ENCODE measurements at regions of chr14 and their contacts with region 1.

Region 1: DNA sequence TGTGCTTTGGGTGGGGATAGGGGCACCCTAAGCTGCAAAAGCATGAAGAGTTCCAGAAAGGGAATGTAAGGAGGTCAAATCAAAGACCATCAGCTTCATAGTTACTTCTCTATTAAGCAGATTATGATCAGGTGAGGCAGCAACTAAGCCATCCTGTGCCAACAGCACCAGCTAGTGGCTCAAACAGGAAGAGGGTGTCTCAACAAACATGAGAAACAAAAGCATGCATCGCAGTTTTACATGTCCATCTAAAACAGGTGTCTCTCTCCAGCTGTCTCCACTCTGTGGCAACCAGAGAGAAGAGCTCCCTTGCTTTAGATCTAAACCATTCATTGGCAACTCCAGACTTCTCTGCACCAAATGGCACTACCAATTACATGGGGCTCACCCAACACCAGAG is 52.9 kb downstream of the ACTN1 start:
- DNase-seq: no peak

Region 2: DNA sequence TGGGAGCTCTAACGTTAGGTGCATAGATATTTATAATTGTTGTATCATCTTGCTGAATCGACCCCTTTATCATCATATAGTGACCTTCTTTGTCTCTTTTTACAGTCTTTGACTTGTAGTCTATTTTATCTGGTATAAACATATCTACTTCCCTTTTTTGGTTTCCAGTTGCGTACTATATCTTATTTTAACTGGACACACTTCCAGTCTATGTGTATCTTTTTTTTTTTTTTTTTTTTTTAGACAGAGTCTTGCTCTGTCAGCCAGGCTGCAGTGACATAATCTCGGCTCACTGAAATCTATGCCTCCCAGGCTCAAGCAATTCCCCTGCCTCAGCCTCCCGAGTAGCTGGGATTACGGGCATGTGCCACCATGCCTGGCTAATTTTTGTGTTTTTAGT is 91.4 kb before region 1 on chr14:
- intact Hi-C with region 1: no loop called
- DNase-seq: no peak

Region 3: DNA sequence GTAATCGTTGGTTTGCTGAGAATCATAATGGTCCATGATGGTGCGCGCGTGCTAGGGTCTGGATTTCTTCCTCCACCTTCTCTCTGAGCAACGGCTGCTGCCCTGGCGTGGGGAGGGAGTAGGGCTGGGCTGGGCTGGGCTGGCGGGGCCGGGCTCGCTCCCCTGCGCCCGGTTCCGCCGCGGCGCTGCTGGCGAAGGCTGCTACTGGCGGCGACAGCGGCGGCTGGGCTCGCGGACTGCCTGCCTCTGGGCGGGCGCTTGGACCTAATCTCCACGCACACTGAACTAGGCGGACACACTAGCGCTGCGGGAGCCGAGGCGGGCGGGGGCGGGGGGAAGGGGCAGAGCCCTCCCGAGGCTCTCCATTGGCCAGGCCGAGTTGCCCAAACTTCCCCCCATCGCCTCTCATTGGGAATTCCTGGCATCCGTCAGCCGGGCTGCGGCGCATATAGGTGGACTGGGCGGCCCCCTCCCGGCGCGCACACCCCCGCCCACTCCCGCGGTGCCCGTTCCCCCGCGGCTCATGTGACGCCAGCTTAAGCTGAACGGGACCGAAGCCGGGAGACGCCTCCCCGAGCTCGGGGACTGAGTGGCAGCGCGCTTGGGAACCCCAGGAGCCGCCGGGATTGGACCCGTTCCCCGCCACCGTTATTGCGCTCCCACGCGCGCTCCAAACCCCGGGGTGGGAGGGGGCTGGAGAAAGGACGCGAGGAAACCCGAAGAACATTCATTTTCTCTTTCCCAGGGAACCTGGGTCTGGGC is 53.0 kb after region 1 on chr14 and contains the start of gene ACTN1:
- intact Hi-C with region 1: loop called in 1 of 2 experiments (anchors 10 kb)
- DNase-seq: peak; percentile 97
- total RNA-seq, gene ACTN1: 665 to 826 TPM

Region 4: GRCh38 chr14:69593018-69593677 is 666.9 kb after region 1 on chr14:
- intact Hi-C with region 1: no loop called
- DNase-seq: peak; percentile 83

Measured in posterior vena cava (tissue), 2 donors.